AG04449 (cell line): ENCODE measurements at regions of chr9 and their contacts with region 1.

Region 1: DNA sequence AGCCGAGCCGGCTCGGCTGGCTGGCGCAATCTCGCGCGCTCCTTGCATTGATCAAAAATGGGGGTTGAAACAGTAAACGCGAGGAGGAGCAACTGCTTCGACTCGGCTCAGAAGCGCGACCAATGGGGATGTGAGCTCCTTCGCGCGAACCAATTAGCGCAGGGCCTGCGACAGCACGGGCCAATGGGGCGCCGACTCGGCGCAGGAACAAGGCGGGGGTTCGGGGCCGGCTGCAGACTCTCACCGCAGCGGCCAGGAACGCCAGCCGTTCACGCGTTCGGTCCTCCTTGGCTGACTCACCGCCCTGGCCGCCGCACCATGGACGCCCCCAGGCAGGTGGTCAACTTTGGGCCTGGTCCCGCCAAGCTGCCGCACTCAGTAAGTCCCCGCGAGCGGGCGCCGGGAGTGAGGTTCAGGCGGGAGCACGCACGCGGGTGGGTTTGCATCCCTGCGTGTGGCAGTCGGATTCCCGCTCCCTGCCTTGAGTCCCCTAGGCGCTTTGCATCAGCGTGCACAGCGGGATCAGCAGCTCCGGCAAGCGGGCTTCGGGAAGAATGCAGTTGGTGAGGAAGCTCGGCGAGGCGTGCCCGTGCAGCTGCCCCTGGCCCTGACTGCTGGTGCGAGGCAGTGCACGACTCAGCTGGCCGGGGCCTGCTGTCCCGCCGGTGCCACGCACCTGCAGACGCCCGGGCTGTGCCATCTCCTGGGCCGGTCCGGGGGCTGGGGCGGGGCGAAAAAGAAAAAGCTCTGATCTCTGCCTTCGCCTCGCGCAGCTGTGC is at the start of gene PSAT1:
- DNase-seq: peak; percentile 88
- H3K4me3 ChIP-seq: peak within 1 kb of the TSS; percentile 99
- CTCF ChIP-seq: no peak

Region 2: GRCh38 chr9:77697238-77697984 is 599.7 kb before region 1 on chr9:
- CTCF ChIA-PET with region 1: no interaction called
- POLR2A ChIA-PET with region 1: no interaction called
- DNase-seq: no peak
- H3K4me3 ChIP-seq: no peak overlapping the region
- CTCF ChIP-seq: no peak

Region 3: GRCh38 chr9:78309066-78309465 is 12.0 kb after region 1 on chr9:
- CTCF ChIA-PET with region 1: interaction called, 6 read pairs
- POLR2A ChIA-PET with region 1: interaction called, 13 read pairs
- DNase-seq: no peak
- H3K4me3 ChIP-seq: no peak overlapping the region
- CTCF ChIP-seq: no peak

Region 4: DNA sequence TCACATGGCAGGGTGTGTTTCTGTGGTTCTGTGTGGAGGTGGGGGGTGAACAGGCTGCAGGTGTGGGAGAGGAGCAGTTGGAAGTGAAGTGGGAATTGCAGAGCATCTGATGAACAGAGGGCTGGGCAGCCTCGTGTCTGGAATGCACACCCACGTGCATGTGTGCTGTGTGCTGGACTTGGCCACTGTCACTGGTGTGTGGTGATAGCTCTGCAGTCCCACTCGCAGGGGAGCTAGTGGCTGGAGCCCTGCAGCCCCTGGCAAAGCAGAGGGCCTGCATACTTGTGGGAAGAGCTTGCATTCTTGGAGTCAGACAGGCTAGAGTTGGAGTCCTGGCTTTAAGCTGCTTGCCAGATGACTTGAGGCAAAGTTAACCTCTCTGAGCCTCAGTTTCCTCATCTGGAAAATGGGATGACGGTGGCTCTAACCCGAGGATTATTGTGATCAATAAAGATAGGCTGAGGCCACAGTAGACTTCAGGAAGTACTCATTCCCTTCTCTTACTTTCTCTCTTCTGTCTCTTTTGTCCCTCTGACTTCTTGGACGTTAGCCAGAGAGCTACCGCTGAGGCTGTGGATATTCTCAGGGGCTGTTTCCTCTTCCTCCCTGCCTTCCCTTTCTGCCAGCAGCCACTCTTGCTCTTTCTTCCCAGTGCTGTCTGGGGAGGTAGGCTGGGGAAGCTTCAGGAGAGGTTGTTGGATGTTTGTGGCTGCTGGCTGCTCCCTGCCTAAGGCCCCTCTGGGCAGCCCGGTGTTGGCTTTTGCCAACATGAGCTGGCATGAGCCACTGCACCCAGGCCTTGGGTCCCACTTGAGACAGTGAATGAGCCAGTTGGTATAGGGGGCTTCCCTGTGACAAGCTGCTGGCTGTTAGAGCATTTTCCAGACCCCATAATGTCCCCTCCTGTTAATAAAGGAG is 18.1 kb after region 1 on chr9:
- CTCF ChIA-PET with region 1: interaction called, 6 read pairs
- POLR2A ChIA-PET with region 1: interaction called, 13 read pairs
- DNase-seq: peak; percentile 38
- H3K4me3 ChIP-seq: no peak overlapping the region
- CTCF ChIP-seq: no peak